K562 (cell line): ENCODE measurements at regions of chr1 and their contacts with region 1.

Region 1: GRCh38 chr1:3869751-3870301 is 12.6 kb downstream of the DFFB start:
- DNase-seq: peak; percentile 81 to 93 (median 86)
- ATAC-seq: peak; percentile 100
- H3K4me3 ChIP-seq: no peak overlapping the region
- H3K27ac ChIP-seq: no peak overlapping the region
- H3K4me1 ChIP-seq: peaks cover 17 to 32% of the 10 kb centered on the region in 2 experiments; a peak in 4 of 5 replicates
- H3K27me3 ChIP-seq: no peaks in the 10 kb centered on the region
- CTCF ChIP-seq: peak; percentile 70 to 84 (median 71)
- EP300 ChIP-seq: peak; percentile 24; the same call in 1 of the 2 replicates
- POLR2A ChIP-seq: no peak
- RAD21 ChIP-seq: peak in 1 of 2 experiments; percentile 56; a peak in 2 of 4 replicates

Region 2: GRCh38 chr1:3856908-3857790 is 12.7 kb before region 1 on chr1 and contains the starts of genes CEP104 and DFFB:
- CTCF ChIA-PET with region 1: interaction called, 6 read pairs
- POLR2A ChIA-PET with region 1: interaction called, 10 read pairs
- in situ Hi-C with region 1: no loop called
- intact Hi-C with region 1: loop called (anchors 1 kb)
- DNase-seq: peak; percentile 100
- ATAC-seq: peak; percentile 98
- H3K4me3 ChIP-seq: peak within 1 kb of the TSS; percentile 90
- H3K27ac ChIP-seq: peak within 1 kb of the TSS; percentile 68
- H3K4me1 ChIP-seq: peaks cover 10 to 37% of the 10 kb centered on the region in 2 experiments; a peak in 3 of 5 replicates
- H3K27me3 ChIP-seq: no peaks in the 10 kb centered on the region
- CTCF ChIP-seq: peak; percentile 72 to 91 (median 85)
- EP300 ChIP-seq: no peak
- POLR2A ChIP-seq: peak; percentile 79
- RAD21 ChIP-seq: peak; percentile 53 to 76
- polyA plus RNA-seq, gene CEP104: 11.2 to 13.4 TPM
- polyA plus RNA-seq, gene DFFB: 2.3 to 6.6 TPM